Activated CD4-positive, alpha-beta T cell treated with anti-CD3 and anti-CD28 coated beads, Interleukin-2, amount 10 ng/mL, durations not matched to agents 24 days and 14 days (primary cell): ENCODE measurements at regions of chr16 and their contacts with region 1.

Region 1: GRCh38 chr16:67645397-67646121 is 615 bp downstream of the CARMIL2 start:
- DNase-seq: no peak
- H3K4me3 Mint-ChIP-seq: peak overlapping the region; percentile 88
- H3K27ac Mint-ChIP-seq: peak overlapping the region; percentile 88
- H3K4me1 Mint-ChIP-seq: peaks cover 17% of the 10 kb centered on the region
- H3K27me3 Mint-ChIP-seq: no peaks in the 10 kb centered on the region

Region 2: DNA sequence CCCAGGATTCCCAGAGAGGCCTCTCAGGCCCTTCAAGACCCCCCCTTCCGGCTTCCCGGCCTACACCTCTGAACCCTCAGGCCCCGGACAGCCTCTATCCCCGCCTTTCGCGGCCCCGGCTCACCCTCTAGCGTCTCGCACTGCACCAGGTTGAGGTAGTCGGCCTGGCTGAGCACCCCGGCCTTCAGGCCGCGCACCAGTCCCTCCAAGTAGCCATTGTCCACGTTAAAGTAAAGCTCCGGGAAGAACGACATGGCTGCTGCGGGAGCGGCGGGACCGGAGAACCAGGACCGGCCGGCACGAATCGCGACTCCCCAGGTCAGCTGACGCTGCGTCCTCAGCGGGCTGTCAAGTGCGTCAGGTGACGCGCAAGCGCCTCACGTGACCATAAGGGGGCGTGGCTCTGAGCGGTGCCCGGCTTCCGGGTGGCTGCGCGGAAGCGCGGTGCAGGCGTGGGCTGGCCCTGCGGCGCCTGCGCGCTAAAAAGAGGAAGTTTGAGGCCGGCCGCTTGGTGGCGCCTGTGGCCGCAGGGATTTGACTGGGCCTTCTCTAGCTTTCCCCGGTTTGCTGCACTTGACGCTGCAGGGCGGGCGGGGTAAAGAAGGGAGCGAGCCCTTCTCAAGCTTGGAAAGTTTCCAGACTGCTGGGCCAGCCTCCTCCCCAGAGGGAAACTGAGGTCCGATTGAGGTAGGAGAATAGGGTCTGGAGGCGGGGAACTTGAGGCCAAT is 164.6 kb before region 1 on chr16 and contains the start of gene ATP6V0D1:
- intact Hi-C with region 1: loop called (anchors 2 kb)
- DNase-seq: peak; percentile 100
- H3K4me3 Mint-ChIP-seq: peak within 1 kb of the TSS; percentile 100
- H3K27ac Mint-ChIP-seq: peak within 1 kb of the TSS; percentile 97
- H3K4me1 Mint-ChIP-seq: peaks cover 17% of the 10 kb centered on the region
- H3K27me3 Mint-ChIP-seq: no peaks in the 10 kb centered on the region
- total RNA-seq, gene ATP6V0D1: 30.9 and 31.8 TPM in 2 replicates

Region 3: GRCh38 chr16:67546761-67547422 is 98.7 kb before region 1 on chr16:
- intact Hi-C with region 1: loop called (anchors 1 kb)
- DNase-seq: peak; percentile 92
- H3K4me3 Mint-ChIP-seq: peak overlapping the region; percentile 58
- H3K27ac Mint-ChIP-seq: peak overlapping the region; percentile 89
- H3K4me1 Mint-ChIP-seq: peaks cover 35% of the 10 kb centered on the region
- H3K27me3 Mint-ChIP-seq: no peaks in the 10 kb centered on the region